ENCODE measurements at regions of chr7 and their contacts with region 1.

Region 1: DNA sequence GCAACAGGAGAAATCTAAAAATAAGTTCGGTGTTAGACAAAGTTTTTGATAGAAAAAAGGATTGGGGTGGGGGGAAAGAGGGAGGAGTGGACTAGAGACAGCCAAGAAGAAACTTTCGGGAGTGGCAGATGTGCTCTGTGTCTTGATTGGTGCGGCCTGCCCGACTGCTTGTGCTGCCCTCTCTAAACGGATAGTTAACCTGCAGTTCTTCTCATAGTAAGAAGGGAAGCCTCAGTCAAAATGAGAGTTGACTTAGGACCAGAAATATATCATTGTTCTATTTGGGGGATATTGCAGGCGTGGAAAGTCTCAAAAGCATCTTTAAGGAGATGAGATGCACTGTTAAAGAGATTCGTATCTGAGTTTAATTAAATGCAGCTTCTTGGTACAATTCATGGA is 39.3 kb downstream of the UBE3C start:
- DNase-seq: no peak
- H3K4me3 ChIP-seq: no peak overlapping the region
- H3K27ac ChIP-seq: no peak overlapping the region
- H3K4me1 ChIP-seq: no peaks in the 10 kb centered on the region
- H3K27me3 ChIP-seq: no peaks in the 10 kb centered on the region
- CTCF ChIP-seq: no peak

Region 2: GRCh38 chr7:157263156-157263555 is 85.2 kb after region 1 on chr7:
- CTCF ChIA-PET with region 1: no interaction called
- dilution Hi-C with region 1: loop called (anchors 5 kb)
- in situ Hi-C with region 1: no loop called
- intact Hi-C with region 1: no loop called
- DNase-seq: no peak
- H3K4me3 ChIP-seq: no peak overlapping the region
- H3K27ac ChIP-seq: no peak overlapping the region
- H3K4me1 ChIP-seq: peaks cover under 1% of the 10 kb centered on the region
- H3K27me3 ChIP-seq: no peaks in the 10 kb centered on the region
- CTCF ChIP-seq: no peak

Measured in mammary epithelial cell (primary cell).